Activated CD8-positive, alpha-beta T cell treated with anti-CD3 and anti-CD28 coated beads, Interleukin-2, amount 10 ng/mL, durations not matched to agents 7 days and 5 days (primary cell): ENCODE measurements at regions of chr5 and their contacts with region 1.

Region 1: DNA sequence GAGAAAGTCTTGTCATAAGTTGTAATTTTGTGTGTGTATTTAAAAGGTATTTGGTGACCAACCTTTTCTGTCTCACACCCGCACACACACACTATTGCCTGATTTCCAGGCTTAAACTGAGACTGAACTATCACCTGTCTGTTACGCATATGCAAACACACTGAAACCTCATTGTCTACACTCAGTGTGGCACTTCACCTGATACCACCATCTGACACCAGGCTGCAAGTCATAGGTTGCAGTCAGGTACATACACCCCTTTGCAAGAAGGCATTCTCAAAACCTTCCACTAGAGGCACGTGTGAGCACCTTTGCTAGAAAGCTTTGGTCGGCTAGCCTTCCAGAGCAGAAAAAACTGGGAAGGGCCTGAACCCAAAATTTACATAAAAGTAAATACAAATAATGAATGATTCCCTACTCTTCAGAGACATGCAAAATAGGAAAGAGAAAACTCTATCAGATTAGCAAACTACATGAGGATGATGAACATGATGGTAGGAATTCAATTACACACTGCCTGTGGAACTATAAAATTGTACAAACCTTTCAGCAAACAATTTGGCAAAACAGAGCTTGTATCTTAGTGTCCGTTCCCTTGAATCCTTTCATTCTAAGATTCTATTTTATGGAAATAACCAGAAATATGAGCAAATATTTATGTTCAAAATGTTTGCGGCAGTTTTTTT is 5.9 kb upstream of the FOXD1 start:
- DNase-seq: peak; percentile 46
- ATAC-seq: peak; percentile 70
- H3K4me3 Mint-ChIP-seq: no peak overlapping the region
- H3K27ac Mint-ChIP-seq: no peak overlapping the region
- H3K4me1 Mint-ChIP-seq: peaks cover 8% of the 10 kb centered on the region
- H3K27me3 Mint-ChIP-seq: peaks cover 49% of the 10 kb centered on the region

Region 2: GRCh38 chr5:73160239-73160671 is 294.2 kb before region 1 on chr5:
- CTCF ChIA-PET with region 1: no interaction called
- POLR2A ChIA-PET with region 1: no interaction called
- DNase-seq: peak; percentile 81
- ATAC-seq: peak; percentile 86
- H3K4me3 Mint-ChIP-seq: peak overlapping the region; percentile 41
- H3K27ac Mint-ChIP-seq: peak overlapping the region; percentile 39
- H3K4me1 Mint-ChIP-seq: peaks cover 26% of the 10 kb centered on the region
- H3K27me3 Mint-ChIP-seq: peaks cover 62% of the 10 kb centered on the region

Region 3: GRCh38 chr5:73312146-73312871 is 142.2 kb before region 1 on chr5:
- CTCF ChIA-PET with region 1: interaction called, 17 read pairs
- POLR2A ChIA-PET with region 1: no interaction called
- DNase-seq: peak; percentile 49
- ATAC-seq: peak; percentile 39
- H3K4me3 Mint-ChIP-seq: no peak overlapping the region
- H3K27ac Mint-ChIP-seq: no peak overlapping the region
- H3K4me1 Mint-ChIP-seq: peaks cover 5% of the 10 kb centered on the region
- H3K27me3 Mint-ChIP-seq: peaks cover 66% of the 10 kb centered on the region

Region 4: DNA sequence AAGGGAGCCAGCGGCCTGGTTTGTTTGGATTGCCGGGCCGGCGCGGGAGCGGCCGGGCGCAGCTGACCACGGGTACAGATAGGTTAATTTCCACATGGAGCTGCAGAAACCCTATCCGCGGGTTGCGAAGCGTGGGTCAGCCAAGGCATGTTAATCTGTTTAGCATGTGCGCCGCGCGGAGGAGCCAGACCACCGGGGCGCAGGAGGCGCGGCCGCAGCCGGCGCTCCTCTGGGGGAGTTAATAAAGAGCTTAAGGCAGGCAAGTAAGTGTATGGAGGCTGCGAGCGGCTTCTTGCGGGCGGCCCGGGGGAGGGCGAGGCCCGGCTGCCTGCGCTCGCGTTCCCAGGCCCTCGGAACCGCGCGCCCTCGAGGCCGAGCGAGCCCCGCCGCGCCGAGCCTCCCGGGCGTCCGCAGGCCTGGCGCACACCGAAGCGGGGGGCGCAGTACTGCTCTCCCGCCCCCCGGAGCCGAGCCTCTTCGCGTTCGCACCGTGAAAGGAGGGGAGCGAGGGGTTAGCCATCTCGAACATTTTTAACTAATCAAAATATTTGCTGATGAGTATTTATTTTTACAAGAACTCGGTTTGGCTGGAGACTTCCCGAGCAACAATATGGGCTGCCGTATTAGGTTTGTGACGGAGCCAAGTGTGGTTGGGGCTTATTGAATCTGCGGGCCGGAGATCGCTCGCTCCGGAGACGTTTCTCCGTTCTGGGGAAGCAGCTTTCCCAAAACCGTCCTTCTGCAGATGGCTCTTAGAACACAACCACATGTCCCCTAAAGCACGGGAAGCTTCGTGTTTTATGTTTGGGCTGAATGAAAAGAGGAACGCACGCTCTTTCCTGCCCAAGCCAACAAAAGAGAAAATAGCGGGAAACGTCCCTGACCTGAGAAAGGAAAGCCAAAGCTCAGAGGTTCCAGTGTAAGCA is 34.8 kb before region 1 on chr5:
- CTCF ChIA-PET with region 1: interaction called, 12 read pairs
- POLR2A ChIA-PET with region 1: interaction called, 3 read pairs
- DNase-seq: no peak
- ATAC-seq: no peak
- H3K4me3 Mint-ChIP-seq: no peak overlapping the region
- H3K27ac Mint-ChIP-seq: no peak overlapping the region
- H3K4me1 Mint-ChIP-seq: peaks cover 3% of the 10 kb centered on the region
- H3K27me3 Mint-ChIP-seq: peaks cover 75% of the 10 kb centered on the region

Region 5: DNA sequence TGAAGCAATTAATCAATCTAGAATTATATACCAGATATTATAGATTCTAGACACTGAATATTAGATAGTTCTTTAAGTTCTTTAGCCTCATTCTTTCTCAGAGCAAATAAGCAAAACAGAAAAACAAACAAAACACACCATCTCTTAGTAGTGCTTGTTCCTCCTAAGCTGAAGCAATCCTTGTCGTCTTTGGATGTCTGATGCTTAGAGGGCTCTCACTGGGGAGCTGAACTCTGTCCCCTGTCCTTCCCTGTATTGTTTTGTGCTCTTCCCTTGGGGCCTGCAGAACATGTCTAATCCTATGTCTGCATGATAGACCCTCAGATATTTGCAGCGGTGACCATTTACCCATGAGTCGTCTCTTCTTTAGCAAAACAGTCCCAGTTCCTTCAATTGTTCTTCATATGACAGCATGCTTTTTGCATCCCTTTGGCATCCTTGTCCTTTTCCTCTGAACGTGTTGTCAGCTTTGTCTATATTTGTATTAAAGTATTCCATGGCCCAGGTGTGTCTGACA is 285.8 kb after region 1 on chr5:
- CTCF ChIA-PET with region 1: no interaction called
- POLR2A ChIA-PET with region 1: no interaction called
- DNase-seq: no peak
- ATAC-seq: no peak
- H3K4me3 Mint-ChIP-seq: no peak overlapping the region
- H3K27ac Mint-ChIP-seq: no peak overlapping the region
- H3K4me1 Mint-ChIP-seq: no peaks in the 10 kb centered on the region
- H3K27me3 Mint-ChIP-seq: peaks cover 11% of the 10 kb centered on the region